ENCODE measurements at regions of chr5 and their contacts with region 1.

Region 1: DNA sequence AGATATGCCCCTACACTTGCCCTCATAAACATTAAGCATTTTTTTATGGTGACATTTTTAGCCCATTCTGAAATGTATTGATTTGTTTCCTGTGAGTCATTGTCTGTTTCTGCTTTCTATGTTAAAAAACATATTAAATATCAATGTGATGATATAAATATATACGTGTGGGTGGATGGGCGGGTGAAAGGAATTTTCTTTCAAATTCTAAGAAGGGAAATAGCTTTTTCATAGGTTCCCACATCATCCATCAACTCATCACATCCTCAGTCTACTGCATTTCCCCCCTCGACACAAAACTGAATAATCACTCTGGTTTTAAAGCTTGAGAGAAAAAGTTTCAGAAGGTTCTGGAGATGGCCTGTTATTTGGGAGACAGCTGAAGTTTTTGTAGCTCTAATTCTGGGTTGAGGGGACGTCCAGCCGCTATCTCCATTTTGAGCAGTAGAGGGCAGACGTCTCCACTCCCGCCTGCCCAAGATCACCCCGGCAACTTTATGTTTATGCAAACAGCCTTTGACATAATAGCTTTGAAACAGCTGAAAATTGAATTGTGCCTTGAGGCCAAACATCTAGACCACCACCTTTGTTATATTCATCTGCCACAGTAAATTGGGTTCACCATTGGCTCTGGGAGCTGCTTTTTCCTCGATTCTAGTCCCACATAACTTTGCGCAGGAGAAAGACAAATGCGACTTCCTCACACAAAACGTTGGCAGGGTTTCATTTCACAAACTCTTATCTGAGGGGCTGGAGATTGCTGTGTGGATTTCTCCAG is 216.2 kb upstream of the CLINT1 start:
- ATAC-seq: peak; percentile 78 to 97 (median 90)
- H3K4me3 ChIP-seq: no peak overlapping the region
- H3K27ac ChIP-seq: peak overlapping the region in 1 of 2 donors; percentile 29
- H3K4me1 ChIP-seq: peaks cover 9 to 11% of the 10 kb centered on the region in 2 donors

Region 2: DNA sequence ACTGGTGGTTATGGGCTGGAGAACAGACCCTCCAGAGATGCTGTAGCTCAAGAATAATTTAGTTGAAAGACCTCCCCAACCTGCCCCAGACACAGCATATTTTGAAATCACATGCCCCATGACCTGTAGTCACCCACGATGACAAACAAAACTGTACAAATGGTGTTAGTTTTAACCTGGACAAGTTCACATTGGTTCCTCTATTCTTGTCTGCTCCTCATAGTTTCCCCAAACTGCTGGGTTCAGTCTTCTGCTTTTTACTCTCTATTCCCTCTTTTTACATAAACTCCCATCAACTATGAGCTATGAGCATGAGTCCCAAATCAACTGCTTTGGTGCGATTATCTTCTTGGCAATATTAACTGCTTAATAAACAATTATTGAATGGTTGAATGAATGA is 149.1 kb after region 1 on chr5:
- in situ Hi-C with region 1: no loop called
- ATAC-seq: no peak
- H3K4me3 ChIP-seq: no peak overlapping the region
- H3K27ac ChIP-seq: no peak overlapping the region
- H3K4me1 ChIP-seq: peaks cover 0 to 8% of the 10 kb centered on the region in 2 donors

Region 3: DNA sequence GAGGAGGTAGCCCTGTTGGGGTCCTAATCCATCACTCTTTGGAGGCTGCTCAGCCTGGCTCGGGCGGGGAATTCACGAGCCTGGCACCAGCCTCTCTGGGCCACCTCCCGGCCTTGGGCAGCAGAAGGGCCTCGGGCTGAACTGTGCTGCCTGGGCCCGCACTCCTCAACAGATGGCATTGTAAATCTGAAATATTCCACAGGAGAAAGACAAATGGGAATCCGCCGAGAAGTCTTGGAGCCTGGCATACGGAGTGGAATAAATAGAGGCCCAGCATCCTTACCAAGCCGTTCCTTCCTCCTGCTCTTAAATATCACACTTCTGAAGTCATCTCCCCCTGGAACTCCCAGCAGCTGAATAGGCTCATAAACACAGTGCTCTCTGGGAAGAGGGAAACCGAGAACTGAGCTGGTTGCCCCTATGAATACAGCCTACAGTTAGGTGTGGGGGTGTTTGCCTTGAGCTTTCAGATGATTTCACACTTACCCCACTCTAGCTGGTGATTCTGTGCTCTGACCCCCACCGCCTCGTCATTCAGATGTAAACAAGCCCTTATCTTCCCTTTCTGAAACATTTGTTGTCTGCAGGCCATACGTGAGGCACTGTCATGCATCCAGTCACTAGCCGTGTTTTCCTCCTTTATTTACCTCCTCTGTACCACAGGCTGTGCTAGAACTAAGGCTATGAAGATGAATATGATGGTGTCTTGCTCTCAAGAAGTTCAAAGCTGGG is 238.7 kb after region 1 on chr5:
- in situ Hi-C with region 1: no loop called
- ATAC-seq: peak in 4 of 8 experiments; percentile 27 to 51 (median 34)
- H3K4me3 ChIP-seq: no peak overlapping the region
- H3K27ac ChIP-seq: no peak overlapping the region
- H3K4me1 ChIP-seq: peaks cover 6 to 15% of the 10 kb centered on the region in 2 donors

Region 4: GRCh38 chr5:158695595-158696330 is 620.6 kb after region 1 on chr5:
- in situ Hi-C with region 1: loop called in 1 of 9 experiments (anchors 25 kb)
- ATAC-seq: peak; percentile 75 to 94 (median 82)
- H3K4me3 ChIP-seq: no peak overlapping the region
- H3K27ac ChIP-seq: no peak overlapping the region
- H3K4me1 ChIP-seq: peaks cover 9 to 26% of the 10 kb centered on the region in 2 donors

Measured in motor neuron (in vitro differentiated cells).